CD4-positive, alpha-beta memory T cell (primary cell): ENCODE measurements at regions of chr2 and their contacts with region 1.

Region 1: DNA sequence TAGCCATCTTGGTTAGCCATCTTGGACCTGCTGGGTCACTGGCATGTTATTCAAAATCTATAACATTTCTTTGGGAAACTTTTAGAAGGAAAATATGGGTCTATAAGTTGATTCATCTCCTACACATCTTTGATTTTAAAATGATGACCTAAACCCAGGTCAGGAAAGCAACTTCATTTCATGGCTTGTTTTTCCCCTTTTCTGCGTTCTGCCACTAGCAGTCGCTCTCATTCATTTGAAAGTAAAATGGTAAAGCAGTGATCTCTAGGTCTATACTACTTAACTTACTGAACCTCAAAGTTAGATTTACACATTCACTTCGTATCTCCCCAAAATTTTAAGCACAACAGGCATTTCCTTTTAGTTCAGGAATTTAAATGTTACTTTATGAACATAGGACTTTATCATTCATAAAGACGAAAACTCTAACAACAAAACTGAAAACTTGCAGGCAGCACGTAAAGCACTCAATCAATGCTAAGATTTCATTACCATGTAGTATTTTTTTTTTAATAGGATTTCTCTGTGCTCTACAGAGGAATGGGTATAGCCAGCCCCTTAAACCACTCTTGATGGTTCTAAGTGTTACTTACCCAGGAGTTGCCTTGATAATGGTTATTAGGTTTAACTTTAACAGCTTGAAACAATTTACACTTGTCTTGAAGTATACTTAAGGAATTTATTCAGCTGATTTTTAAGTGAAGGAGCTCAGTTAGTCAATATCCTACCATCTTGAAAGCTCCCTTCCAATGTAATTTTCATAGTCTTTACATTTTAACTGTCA is 62.5 kb downstream of the GORASP2 start:
- DNase-seq: no peak
- H3K4me3 ChIP-seq: no peak overlapping the region
- H3K4me3 Mint-ChIP-seq: no peak overlapping the region
- H3K27ac ChIP-seq: no peak overlapping the region
- H3K27ac Mint-ChIP-seq: peak overlapping the region in 1 of 7 donors; percentile 30
- H3K4me1 ChIP-seq: no peaks in the 10 kb centered on the region
- H3K4me1 Mint-ChIP-seq: peaks cover 0 to 4% (median 2%) of the 10 kb centered on the region in 4 donors
- H3K27me3 ChIP-seq: no peaks in the 10 kb centered on the region
- H3K27me3 Mint-ChIP-seq: no peaks in the 10 kb centered on the region

Region 2: DNA sequence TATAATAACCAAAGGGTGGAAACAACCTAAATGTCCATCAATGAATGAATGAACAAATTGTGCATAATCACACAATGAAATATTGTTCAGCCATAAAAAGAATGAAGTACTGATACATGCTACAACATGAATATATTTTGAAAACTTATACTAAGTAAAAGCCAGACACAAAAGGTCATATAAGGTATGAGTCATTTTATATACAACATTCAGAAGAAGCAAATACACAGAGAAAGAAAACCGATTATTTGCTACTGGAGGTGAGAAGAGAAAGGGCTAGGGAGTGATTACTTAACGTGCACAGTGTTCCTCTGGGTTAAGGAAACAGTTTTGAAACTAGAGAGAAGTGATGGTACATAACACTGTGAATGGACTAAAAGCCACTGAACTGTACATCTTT is 42.7 kb after region 1 on chr2:
- CTCF ChIA-PET with region 1: no interaction called
- POLR2A ChIA-PET with region 1: no interaction called
- intact Hi-C with region 1: loop called (anchors 5 kb)
- DNase-seq: no peak
- H3K4me3 ChIP-seq: no peak overlapping the region
- H3K4me3 Mint-ChIP-seq: no peak overlapping the region
- H3K27ac ChIP-seq: no peak overlapping the region
- H3K27ac Mint-ChIP-seq: peak overlapping the region in 1 of 7 donors; percentile 7
- H3K4me1 ChIP-seq: no peaks in the 10 kb centered on the region
- H3K4me1 Mint-ChIP-seq: peaks cover 1 to 12% (median 10%) of the 10 kb centered on the region in 4 donors
- H3K27me3 ChIP-seq: no peaks in the 10 kb centered on the region
- H3K27me3 Mint-ChIP-seq: no peaks in the 10 kb centered on the region

Region 3: DNA sequence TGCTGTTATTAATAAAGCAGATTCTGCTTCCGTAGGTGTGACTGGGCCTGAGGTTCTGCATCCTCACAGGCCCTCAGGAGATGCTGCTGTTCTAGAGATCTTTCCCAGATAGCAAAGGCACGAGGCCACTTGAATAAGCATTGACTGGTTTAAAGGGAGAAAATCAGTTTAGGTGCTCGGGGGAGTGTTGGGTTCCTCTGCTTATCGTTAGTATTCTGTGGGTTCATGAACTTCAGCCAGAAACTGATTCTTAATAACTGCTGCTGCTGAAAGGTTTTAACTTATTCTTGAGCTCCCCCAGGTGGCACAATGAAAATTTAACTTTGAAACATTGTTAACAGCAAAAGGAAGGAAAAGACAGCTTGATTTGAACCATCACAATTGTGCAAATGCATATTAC is 1492.7 kb after region 1 on chr2:
- CTCF ChIA-PET with region 1: no interaction called
- POLR2A ChIA-PET with region 1: no interaction called
- intact Hi-C with region 1: no loop called
- DNase-seq: peak in 4 of 5 donors; percentile 25 to 34 (median 32)
- H3K4me3 ChIP-seq: no peak overlapping the region
- H3K4me3 Mint-ChIP-seq: no peak overlapping the region
- H3K27ac ChIP-seq: no peak overlapping the region
- H3K27ac Mint-ChIP-seq: peak overlapping the region in 5 of 7 donors; percentile 23 to 76 (median 66)
- H3K4me1 ChIP-seq: peaks cover 6% of the 10 kb centered on the region
- H3K4me1 Mint-ChIP-seq: peaks cover 26 to 51% (median 34%) of the 10 kb centered on the region in 4 donors
- H3K27me3 ChIP-seq: no peaks in the 10 kb centered on the region
- H3K27me3 Mint-ChIP-seq: no peaks in the 10 kb centered on the region